CD8-positive, alpha-beta memory T cell (primary cell): ENCODE measurements at regions of chr15 and their contacts with region 1.

Region 1: DNA sequence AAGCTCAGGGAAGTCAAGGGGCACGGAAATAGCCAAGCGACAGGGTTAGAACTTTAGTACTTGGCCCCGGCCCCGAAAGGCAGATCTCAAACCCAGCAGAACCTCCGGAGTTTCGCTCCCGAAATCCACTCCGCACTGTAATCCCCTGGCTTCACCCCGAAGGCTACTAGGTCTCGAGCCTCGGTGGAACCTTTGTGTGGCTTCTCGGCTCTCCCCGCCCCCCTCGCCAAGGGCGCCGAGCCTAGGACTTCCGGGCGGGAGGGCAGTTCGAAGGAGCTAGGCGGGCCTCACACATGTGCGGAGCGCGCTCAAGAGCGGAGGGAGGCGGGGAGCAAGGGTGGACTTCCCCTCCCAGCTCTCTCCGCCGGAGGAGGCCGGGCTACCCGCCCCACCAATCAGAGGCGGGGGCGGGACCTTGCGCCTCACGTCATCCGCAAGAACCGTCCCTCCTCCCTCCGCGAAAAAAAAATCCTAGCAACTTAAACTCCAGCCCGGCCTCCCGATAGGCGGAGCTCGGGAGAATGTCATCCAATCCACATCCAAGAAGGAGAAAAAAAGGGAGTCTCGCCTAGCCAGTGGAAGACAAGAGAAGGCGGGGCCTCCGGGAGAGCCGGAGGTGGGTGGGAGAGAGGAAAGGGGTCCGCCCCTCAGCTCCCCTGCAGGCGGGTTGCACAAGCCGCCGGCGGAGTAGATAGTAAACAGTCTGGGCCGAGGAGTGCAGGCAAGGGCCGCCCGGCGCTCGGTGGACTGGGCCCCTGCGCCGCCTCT is 2.4 kb upstream of the SIN3A start:
- DNase-seq: peak; percentile 94 to 99 (median 98)
- H3K4me3 ChIP-seq: peak overlapping the region; percentile 90
- H3K4me3 Mint-ChIP-seq: peak overlapping the region; percentile 93 to 98 (median 96)
- H3K27ac ChIP-seq: peak overlapping the region; percentile 94
- H3K27ac Mint-ChIP-seq: peak overlapping the region; percentile 95 to 99 (median 98)
- H3K4me1 ChIP-seq: peaks cover 35% of the 10 kb centered on the region
- H3K4me1 Mint-ChIP-seq: peaks cover 37 to 43% (median 41%) of the 10 kb centered on the region in 3 donors
- H3K27me3 ChIP-seq: no peaks in the 10 kb centered on the region
- H3K27me3 Mint-ChIP-seq: peaks cover 0 to 1% of the 10 kb centered on the region in 2 donors

Region 2: DNA sequence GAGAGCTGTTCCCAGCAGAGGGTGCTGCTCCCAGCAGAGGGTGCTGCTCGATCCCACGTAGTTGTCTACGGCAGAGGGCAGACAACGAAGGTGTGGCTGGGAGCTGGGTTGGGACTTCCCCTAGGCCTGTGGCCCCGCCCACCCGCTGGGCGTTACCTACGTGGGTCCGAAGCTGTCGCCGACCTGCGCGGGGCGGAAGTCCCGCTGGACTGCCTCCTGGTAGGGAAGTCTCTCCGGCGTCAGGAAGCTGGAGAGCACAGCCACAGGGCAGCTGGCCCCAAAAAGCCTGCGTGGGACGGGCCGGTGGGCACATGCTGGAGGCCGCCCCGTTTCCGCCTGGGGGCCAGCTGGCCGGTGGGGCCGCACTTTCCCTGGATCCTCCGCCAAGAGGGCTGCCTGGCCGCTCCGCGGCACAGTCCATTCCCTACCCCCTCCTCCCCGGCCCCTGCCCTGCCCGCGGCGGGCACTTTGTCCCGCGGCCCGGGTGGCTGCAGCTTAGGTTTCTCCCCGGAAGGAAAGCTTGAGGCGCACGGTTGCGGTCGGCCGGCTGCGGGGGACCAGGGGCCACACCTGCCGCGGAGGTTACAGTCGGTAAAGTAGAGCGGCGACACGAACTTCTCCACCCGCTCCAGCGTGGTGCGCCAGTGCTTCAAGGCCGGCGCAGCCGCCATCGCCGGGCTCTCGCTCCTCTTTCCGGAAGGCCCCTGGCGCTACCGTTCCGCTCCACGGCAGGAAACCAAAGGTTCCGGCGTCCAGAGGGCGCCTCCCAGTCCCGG is 85.8 kb before region 1 on chr15 and contains the start of gene MAN2C1:
- CTCF ChIA-PET with region 1: interaction called, 52 read pairs
- POLR2A ChIA-PET with region 1: interaction called, 106 read pairs
- DNase-seq: peak; percentile 85 to 94 (median 87)
- H3K4me3 ChIP-seq: peak within 1 kb of the TSS; percentile 88
- H3K4me3 Mint-ChIP-seq: peak within 1 kb of the TSS; percentile 88 to 97 (median 92)
- H3K27ac ChIP-seq: peak within 1 kb of the TSS; percentile 97
- H3K27ac Mint-ChIP-seq: peak within 1 kb of the TSS; percentile 94 to 99 (median 96)
- H3K4me1 ChIP-seq: peaks cover 16% of the 10 kb centered on the region
- H3K4me1 Mint-ChIP-seq: peaks cover 24 to 28% (median 25%) of the 10 kb centered on the region in 3 donors
- H3K27me3 ChIP-seq: no peaks in the 10 kb centered on the region
- H3K27me3 Mint-ChIP-seq: no peaks in the 10 kb centered on the region
- total RNA-seq, gene MAN2C1: 127 to 133 TPM

Region 3: DNA sequence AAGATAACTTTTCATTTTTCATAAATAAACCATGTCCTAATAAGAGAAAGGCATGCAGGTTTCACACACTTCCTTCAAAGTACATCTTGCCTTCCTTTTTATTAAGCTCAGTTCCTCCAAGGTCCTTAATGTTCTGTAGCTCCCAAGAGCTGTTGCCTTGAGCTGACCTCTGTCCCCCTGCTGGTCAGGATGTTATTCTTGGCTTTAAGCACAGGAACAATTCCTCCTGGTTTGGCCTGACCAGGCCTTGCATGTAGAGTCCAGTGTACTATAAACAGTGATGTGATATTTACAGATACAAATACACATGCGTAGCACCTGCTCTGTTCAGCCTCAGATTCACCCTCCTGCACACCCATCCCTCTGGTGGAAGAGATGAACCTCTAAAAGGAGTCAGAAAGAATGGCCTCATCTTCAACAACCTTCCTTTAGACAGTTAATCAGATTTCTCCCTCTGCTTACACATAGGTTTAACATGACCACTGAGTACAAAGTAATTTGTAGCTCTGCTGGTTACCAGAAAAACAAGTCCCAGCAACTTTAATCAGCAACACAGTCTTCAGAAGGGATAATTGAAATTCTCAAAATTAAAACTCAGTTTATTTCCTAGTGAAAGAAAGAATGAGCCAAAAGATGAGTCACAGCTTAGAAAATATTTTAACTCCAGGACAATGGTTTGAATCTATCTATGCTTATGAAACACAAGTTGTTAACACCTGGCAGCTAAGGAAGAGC is 78.7 kb after region 1 on chr15:
- CTCF ChIA-PET with region 1: no interaction called
- POLR2A ChIA-PET with region 1: no interaction called
- DNase-seq: no peak
- H3K4me3 ChIP-seq: no peak overlapping the region
- H3K4me3 Mint-ChIP-seq: no peak overlapping the region
- H3K27ac ChIP-seq: no peak overlapping the region
- H3K27ac Mint-ChIP-seq: peak overlapping the region; percentile 21 to 73 (median 52)
- H3K4me1 ChIP-seq: peaks cover 3% of the 10 kb centered on the region
- H3K4me1 Mint-ChIP-seq: peaks cover 20 to 41% (median 38%) of the 10 kb centered on the region in 3 donors
- H3K27me3 ChIP-seq: no peaks in the 10 kb centered on the region
- H3K27me3 Mint-ChIP-seq: no peaks in the 10 kb centered on the region

Region 4: GRCh38 chr15:75578948-75579920 is 125.3 kb after region 1 on chr15 and contains the start of gene PTPN9:
- CTCF ChIA-PET with region 1: interaction called, 5 read pairs
- POLR2A ChIA-PET with region 1: interaction called, 14 read pairs
- DNase-seq: peak; percentile 52 to 80 (median 57)
- H3K4me3 ChIP-seq: peak within 1 kb of the TSS; percentile 68
- H3K4me3 Mint-ChIP-seq: peak within 1 kb of the TSS; percentile 90 to 97 (median 95)
- H3K27ac ChIP-seq: peak within 1 kb of the TSS; percentile 66
- H3K27ac Mint-ChIP-seq: peak within 1 kb of the TSS; percentile 85 to 98 (median 95)
- H3K4me1 ChIP-seq: peaks cover 6% of the 10 kb centered on the region
- H3K4me1 Mint-ChIP-seq: peaks cover 22 to 27% (median 24%) of the 10 kb centered on the region in 3 donors
- H3K27me3 ChIP-seq: no peaks in the 10 kb centered on the region
- H3K27me3 Mint-ChIP-seq: no peaks in the 10 kb centered on the region
- total RNA-seq, gene PTPN9: 22.0 to 22.3 TPM

Region 5: DNA sequence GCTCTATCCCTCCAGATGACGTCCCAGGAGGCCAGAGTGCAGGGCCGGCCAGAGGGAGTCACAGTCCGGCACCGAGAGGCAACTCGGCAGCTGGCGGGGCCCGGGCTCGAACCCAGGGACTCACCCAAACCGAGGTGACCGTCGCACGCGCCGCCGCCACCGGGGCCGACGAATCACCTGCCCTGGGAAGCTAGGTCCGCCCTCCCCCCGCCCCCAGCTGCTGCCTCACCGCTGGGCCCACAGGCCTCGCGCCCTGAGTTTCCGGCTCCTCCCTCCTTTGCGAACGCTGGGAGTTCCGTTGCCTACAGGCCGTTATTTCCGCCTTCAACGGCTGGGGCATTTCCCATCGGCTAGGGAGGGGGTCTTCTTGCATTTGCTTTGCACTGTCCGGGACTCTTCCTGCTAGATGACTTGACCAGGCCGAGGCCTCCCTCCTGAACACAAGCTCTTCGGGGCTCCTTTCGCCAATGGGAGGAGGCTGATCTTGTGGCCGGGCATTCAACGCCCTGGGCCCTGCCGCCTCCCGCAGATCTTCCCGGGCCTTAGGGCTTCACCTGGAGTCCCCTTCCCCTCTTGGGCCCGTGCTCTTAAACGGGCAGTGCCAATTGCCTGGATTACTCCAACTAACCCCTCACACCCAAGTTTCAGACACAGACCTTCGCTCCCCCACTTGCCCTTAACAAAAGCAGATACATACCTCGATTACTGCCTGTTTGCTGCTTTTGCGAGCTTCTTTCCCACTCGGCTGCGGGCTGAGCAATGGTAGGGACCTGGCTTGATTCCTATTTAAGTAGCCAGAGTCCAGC is 171.9 kb after region 1 on chr15 and contains the start of gene SNUPN:
- CTCF ChIA-PET with region 1: interaction called, 5 read pairs
- POLR2A ChIA-PET with region 1: interaction called, 41 read pairs
- DNase-seq: peak; percentile 85 to 95 (median 87)
- H3K4me3 ChIP-seq: peak within 1 kb of the TSS; percentile 78
- H3K4me3 Mint-ChIP-seq: peak within 1 kb of the TSS; percentile 89 to 97 (median 90)
- H3K27ac ChIP-seq: peak within 1 kb of the TSS; percentile 85
- H3K27ac Mint-ChIP-seq: peak within 1 kb of the TSS; percentile 96 to 100 (median 98)
- H3K4me1 ChIP-seq: peaks cover 24% of the 10 kb centered on the region
- H3K4me1 Mint-ChIP-seq: peaks cover 19 to 33% (median 28%) of the 10 kb centered on the region in 3 donors
- H3K27me3 ChIP-seq: no peaks in the 10 kb centered on the region
- H3K27me3 Mint-ChIP-seq: no peaks in the 10 kb centered on the region
- total RNA-seq, gene SNUPN: 24.6 to 26.9 TPM

Region 6: DNA sequence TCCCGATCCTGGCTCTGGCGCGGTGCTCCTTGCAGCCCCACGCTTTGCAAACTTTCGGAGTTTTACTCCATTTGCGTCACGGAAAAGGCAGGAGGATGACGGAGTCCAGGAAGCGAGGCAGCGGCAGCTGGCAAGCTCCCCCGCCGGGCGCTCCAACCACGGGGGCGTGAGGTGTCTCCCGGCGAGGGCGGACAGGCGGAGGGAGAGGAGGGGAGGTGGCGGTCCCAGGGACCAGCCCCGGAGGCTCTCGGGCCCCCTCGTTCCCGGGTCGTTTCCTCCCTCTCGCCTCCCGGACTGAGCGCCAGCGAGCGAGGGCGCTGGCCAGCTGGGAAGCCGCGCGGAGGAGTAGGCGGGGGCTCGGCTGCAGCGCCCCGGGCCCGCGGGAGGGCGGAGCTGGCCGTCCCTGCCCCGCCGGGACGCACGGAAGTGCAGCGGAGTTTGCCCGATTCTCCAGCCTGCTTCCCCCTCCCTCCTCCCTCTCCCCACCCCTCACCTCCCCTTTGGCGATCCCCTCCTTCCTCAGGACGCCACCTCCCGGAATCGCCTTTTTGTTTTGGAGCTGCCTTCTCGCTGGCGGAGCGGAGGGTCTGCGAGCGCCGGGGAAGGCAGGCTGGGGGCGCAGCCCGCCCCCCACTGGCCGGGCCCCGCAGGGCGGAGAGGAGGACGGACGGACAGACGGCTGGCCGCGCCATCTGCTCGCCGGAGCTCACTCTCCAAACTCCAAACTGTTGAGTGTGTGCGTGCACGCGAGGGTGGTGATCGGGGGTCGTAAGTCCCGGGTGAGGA is 193.7 kb after region 1 on chr15 and contains the start of gene SNX33:
- CTCF ChIA-PET with region 1: interaction called, 5 read pairs
- POLR2A ChIA-PET with region 1: interaction called, 130 read pairs
- DNase-seq: peak; percentile 43 to 72 (median 45)
- H3K4me3 ChIP-seq: peak within 1 kb of the TSS; percentile 93
- H3K4me3 Mint-ChIP-seq: peak within 1 kb of the TSS; percentile 83 to 93 (median 88)
- H3K27ac ChIP-seq: peak within 1 kb of the TSS; percentile 70
- H3K27ac Mint-ChIP-seq: peak within 1 kb of the TSS in 7 of 8 donors; percentile 66 to 92 (median 84)
- H3K4me1 ChIP-seq: peaks cover 21% of the 10 kb centered on the region
- H3K4me1 Mint-ChIP-seq: peaks cover 34 to 57% (median 40%) of the 10 kb centered on the region in 3 donors
- H3K27me3 ChIP-seq: no peaks in the 10 kb centered on the region
- H3K27me3 Mint-ChIP-seq: no peaks in the 10 kb centered on the region
- total RNA-seq, gene SNX33: 3.1 to 3.5 TPM

Region 7: GRCh38 chr15:75723847-75724660 is 270.2 kb after region 1 on chr15:
- CTCF ChIA-PET with region 1: no interaction called
- POLR2A ChIA-PET with region 1: no interaction called
- DNase-seq: peak in 2 of 5 donors; percentile 16 to 55
- H3K4me3 ChIP-seq: no peak overlapping the region
- H3K4me3 Mint-ChIP-seq: no peak overlapping the region
- H3K27ac ChIP-seq: no peak overlapping the region
- H3K27ac Mint-ChIP-seq: no peak overlapping the region
- H3K4me1 ChIP-seq: no peaks in the 10 kb centered on the region
- H3K4me1 Mint-ChIP-seq: peaks cover 0 to 2% (median 0%) of the 10 kb centered on the region in 3 donors
- H3K27me3 ChIP-seq: no peaks in the 10 kb centered on the region
- H3K27me3 Mint-ChIP-seq: peaks cover 8 to 23% of the 10 kb centered on the region in 2 donors

Region 8: GRCh38 chr15:75929799-75930565 is 476.1 kb after region 1 on chr15:
- CTCF ChIA-PET with region 1: no interaction called
- POLR2A ChIA-PET with region 1: no interaction called
- DNase-seq: no peak
- H3K4me3 ChIP-seq: no peak overlapping the region
- H3K4me3 Mint-ChIP-seq: no peak overlapping the region
- H3K27ac ChIP-seq: no peak overlapping the region
- H3K27ac Mint-ChIP-seq: peak overlapping the region in 2 of 8 donors; percentile 20 to 53
- H3K4me1 ChIP-seq: peaks cover 3% of the 10 kb centered on the region
- H3K4me1 Mint-ChIP-seq: peaks cover 34 to 45% (median 35%) of the 10 kb centered on the region in 3 donors
- H3K27me3 ChIP-seq: no peaks in the 10 kb centered on the region
- H3K27me3 Mint-ChIP-seq: no peaks in the 10 kb centered on the region